ENCODE measurements at regions of chr11 and their contacts with region 1.

Region 1: GRCh38 chr11:18408558-18409242 is 3.4 kb upstream of the LDHC start:
- DNase-seq: no peak
- ATAC-seq: no peak
- H3K4me3 Mint-ChIP-seq: no peak overlapping the region
- H3K27ac Mint-ChIP-seq: peak overlapping the region; percentile 57; the same call in 1 of the 2 replicates
- H3K4me1 Mint-ChIP-seq: peaks cover 8% of the 10 kb centered on the region
- H3K27me3 Mint-ChIP-seq: peaks cover 26% of the 10 kb centered on the region
- CTCF ChIP-seq: no peak

Region 2: GRCh38 chr11:17939542-17939941 is 469.2 kb before region 1 on chr11:
- CTCF ChIA-PET with region 1: no interaction called
- POLR2A ChIA-PET with region 1: no interaction called
- DNase-seq: no peak
- ATAC-seq: no peak
- H3K4me3 Mint-ChIP-seq: no peak overlapping the region
- H3K27ac Mint-ChIP-seq: no peak overlapping the region
- H3K4me1 Mint-ChIP-seq: peaks cover 3% of the 10 kb centered on the region; the same call in 1 of the 2 replicates
- H3K27me3 Mint-ChIP-seq: no peaks in the 10 kb centered on the region
- CTCF ChIP-seq: no peak

Region 3: DNA sequence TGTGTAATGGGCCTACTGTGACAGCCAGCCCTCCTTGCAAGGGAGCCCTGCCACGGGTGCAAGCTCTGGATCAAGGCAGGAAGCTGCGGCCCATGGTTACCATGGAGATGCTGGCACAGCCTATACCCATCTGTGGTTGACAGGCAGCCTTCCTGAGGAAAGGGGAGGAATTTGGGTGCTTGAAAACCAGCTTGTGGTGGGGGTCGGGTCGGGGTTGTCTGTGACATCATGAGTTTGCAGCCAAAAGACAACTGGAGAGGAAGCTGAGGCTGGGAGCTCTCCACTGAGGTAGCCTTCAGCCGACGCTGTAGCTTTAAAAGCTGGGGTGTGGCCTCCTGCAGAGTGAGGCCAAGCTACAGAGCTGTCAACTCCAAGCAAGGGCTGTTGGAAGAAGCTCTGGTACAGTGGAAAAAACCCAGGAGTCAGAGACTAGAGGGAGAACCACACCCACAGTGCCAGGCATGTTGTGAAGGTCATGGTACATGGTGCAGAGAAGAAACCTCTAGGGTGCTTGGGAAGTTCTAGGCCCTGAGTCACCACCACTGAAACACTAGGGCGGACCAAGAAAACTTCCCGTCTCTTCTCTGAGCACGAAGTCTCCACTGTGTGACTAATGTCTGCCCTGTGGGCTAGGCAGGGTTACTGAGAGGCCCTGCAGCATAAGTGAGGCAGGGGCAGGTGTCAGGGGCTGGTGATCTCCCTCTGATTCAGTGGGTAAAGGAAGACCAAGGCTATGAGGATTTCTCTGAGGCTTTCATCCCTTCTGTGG is 25.1 kb before region 1 on chr11:
- CTCF ChIA-PET with region 1: interaction called, 12 read pairs
- POLR2A ChIA-PET with region 1: no interaction called
- DNase-seq: no peak
- ATAC-seq: peak; percentile 63
- H3K4me3 Mint-ChIP-seq: no peak overlapping the region
- H3K27ac Mint-ChIP-seq: no peak overlapping the region
- H3K4me1 Mint-ChIP-seq: peaks cover 13% of the 10 kb centered on the region; the same call in 1 of the 2 replicates
- H3K27me3 Mint-ChIP-seq: peaks cover 4% of the 10 kb centered on the region; the same call in 1 of the 2 replicates
- CTCF ChIP-seq: no peak

Measured in WTC11 (cell line).